Activated B cell treated with CpG ODN at 0.5 μM for 24 hours (primary cell): ENCODE measurements at regions of chr10 and their contacts with region 1.

Region 1: DNA sequence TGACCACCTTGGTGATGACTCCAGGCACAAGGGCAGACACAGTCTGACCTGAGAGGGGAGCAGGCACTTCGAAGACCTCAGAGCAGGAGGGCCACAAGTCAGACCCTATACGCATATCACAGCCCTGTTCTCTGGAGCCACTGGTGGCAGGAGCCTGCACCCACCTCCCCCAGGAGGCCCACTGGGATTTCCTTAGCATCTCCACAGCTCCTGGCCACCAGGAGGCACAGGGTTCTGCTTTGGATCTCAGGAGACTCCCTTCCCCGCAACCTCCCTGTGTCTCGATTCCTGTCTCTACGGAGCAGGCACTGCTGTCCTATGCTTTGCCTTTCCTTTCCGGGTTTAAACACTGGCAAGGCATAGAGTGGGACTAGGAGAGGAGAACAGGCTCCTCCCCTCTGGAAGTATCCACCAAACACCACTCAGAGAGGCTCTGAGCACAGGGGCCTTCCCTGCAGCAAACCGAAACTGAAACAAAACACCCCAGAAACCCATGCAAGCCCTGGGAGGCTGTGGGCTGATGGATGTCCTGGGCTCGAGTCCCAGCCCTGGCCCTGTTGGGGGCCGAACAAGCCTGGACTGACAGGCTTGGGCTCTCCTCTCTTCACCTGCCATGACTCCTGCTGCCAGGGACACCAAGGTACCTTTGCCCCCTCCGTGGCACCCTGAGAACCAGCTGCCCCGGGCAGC is 166.3 kb downstream of the NEURL1 start:
- DNase-seq: peak; percentile 24
- ATAC-seq: peak; percentile 76
- H3K4me3 Mint-ChIP-seq: peak overlapping the region; percentile 83
- H3K27ac Mint-ChIP-seq: peak overlapping the region; percentile 56
- H3K4me1 Mint-ChIP-seq: peaks cover 18% of the 10 kb centered on the region
- H3K27me3 Mint-ChIP-seq: no peaks in the 10 kb centered on the region
- CTCF ChIP-seq: no peak

Region 2: DNA sequence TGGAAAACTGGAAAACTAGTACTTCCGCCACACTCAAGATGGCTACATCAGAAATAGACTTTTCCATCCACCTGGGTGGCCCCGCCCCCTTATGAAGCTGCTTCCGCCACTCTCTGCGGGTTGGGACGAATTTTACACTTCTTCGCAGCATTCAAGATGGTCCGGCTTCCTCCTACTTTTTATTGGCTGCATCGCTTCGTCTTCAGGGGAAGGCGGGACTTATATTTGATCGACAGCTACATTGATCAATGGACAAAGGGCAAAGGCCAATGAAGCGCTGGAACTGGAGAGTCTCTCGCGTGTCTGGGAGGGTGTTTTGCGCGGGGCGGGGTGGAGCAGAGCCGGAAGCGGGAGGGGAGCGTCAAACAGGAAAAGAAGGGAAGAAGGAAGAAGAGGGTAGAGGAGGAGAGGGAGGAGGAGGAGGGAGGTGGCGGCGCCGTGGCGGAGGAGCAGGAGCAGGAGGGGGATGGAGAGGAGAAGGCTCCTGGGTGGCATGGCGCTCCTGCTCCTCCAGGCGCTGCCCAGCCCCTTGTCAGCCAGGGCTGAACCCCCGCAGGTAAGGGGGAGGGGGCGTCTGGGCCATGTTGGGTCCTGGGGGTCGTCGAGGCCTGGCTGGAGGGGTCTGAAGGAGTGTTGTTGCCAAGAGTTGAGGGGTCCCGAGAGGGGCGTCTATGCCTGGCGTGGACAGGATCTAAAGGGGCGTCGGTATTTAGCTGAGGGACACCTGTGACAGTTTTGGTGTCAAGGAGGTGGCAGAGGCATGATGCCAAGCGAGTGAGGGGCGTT is 916.0 kb before region 1 on chr10 and contains the start of gene WBP1L:
- CTCF ChIA-PET with region 1: no interaction called
- POLR2A ChIA-PET with region 1: no interaction called
- intact Hi-C with region 1: no loop called
- DNase-seq: peak; percentile 81
- ATAC-seq: peak; percentile 98
- H3K4me3 Mint-ChIP-seq: peak within 1 kb of the TSS; percentile 93
- H3K27ac Mint-ChIP-seq: peak within 1 kb of the TSS; percentile 87
- H3K4me1 Mint-ChIP-seq: peaks cover 47% of the 10 kb centered on the region
- H3K27me3 Mint-ChIP-seq: no peaks in the 10 kb centered on the region
- CTCF ChIP-seq: no peak
- total RNA-seq, gene WBP1L: 30.5 and 30.8 TPM in 2 replicates

Region 3: GRCh38 chr10:103637927-103638557 is 21.8 kb before region 1 on chr10:
- CTCF ChIA-PET with region 1: no interaction called
- POLR2A ChIA-PET with region 1: interaction called, 13 read pairs
- intact Hi-C with region 1: no loop called
- DNase-seq: no peak
- ATAC-seq: no peak
- H3K4me3 Mint-ChIP-seq: no peak overlapping the region
- H3K27ac Mint-ChIP-seq: no peak overlapping the region
- H3K4me1 Mint-ChIP-seq: peaks cover 2% of the 10 kb centered on the region
- H3K27me3 Mint-ChIP-seq: no peaks in the 10 kb centered on the region
- CTCF ChIP-seq: no peak

Region 4: DNA sequence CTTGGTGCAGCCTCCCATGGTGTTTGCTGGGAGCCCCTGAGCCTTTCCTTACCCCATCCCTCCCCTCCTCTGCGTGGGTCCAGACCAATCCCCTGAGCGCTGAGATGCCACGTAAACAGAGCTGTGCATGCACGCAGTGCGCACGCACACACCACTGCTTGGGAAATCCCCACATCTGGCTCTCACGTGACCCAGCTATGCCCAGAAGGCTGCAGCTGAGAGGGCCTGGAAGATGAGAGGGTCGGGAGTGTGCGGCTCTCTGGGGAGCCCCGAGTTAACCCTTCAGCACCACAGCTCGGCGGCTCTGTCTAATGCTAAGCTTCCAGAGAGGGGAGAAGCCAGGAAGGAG is 18.3 kb after region 1 on chr10:
- CTCF ChIA-PET with region 1: no interaction called
- POLR2A ChIA-PET with region 1: interaction called, 13 read pairs
- intact Hi-C with region 1: loop called (anchors 1 kb)
- DNase-seq: peak; percentile 79
- ATAC-seq: peak; percentile 93
- H3K4me3 Mint-ChIP-seq: peak overlapping the region; percentile 80
- H3K27ac Mint-ChIP-seq: peak overlapping the region; percentile 88
- H3K4me1 Mint-ChIP-seq: peaks cover 40% of the 10 kb centered on the region
- H3K27me3 Mint-ChIP-seq: no peaks in the 10 kb centered on the region
- CTCF ChIP-seq: no peak

Region 5: GRCh38 chr10:103685880-103686669 is 26.3 kb after region 1 on chr10:
- CTCF ChIA-PET with region 1: interaction called, 15 read pairs
- POLR2A ChIA-PET with region 1: interaction called, 3 read pairs
- intact Hi-C with region 1: loop called (anchors 1 kb)
- DNase-seq: peak; percentile 71
- ATAC-seq: peak; percentile 96
- H3K4me3 Mint-ChIP-seq: no peak overlapping the region
- H3K27ac Mint-ChIP-seq: no peak overlapping the region
- H3K4me1 Mint-ChIP-seq: peaks cover 15% of the 10 kb centered on the region
- H3K27me3 Mint-ChIP-seq: no peaks in the 10 kb centered on the region
- CTCF ChIP-seq: peak; percentile 61